ENCODE measurements at regions of chr3 and their contacts with region 1.

Region 1: GRCh38 chr3:196195664-196196265 is 15.4 kb downstream of the ZDHHC19 start:
- DNase-seq: no peak
- H3K4me3 ChIP-seq: no peak overlapping the region
- H3K27ac ChIP-seq: no peak overlapping the region
- H3K4me1 ChIP-seq: no peaks in the 10 kb centered on the region
- H3K27me3 ChIP-seq: no peaks in the 10 kb centered on the region
- CTCF ChIP-seq: no peak
- POLR2A ChIP-seq: no peak

Region 2: DNA sequence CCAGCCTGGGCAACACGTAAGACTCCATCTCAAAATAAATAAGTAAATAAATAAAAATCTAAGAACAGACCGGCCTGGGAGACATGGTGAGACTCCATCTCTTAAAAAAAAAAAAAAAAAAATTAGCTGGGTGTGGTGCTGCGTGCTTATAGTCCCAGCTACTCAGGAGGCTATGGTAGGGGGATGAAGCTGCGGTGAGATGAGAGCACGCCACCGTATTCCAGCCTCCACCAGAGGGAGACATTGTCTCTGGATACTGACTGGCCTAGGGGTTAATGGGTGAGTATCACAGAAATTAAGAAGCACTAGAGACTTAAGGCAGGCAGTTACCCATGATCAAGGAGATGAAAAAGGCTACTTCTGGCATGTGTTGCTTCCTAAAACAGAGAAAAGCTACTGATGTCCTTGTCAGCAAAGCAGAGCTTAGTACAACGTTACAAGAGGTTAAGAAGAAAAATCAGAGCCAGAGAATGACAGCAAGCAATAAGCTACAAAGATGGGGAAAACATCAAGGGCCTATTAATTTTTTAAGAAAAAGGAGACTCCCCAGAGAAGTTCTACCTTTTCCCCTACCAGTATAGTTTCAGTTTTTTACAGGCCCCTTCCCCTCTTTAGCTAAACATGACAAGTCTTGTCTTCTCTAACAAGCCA is 122.5 kb before region 1 on chr3:
- intact Hi-C with region 1: loop called (anchors 1 kb)
- DNase-seq: peak; percentile 70
- H3K4me3 ChIP-seq: no peak overlapping the region
- H3K27ac ChIP-seq: no peak overlapping the region
- H3K4me1 ChIP-seq: no peaks in the 10 kb centered on the region
- H3K27me3 ChIP-seq: no peaks in the 10 kb centered on the region
- CTCF ChIP-seq: peak; percentile 64 to 87 (median 86)
- POLR2A ChIP-seq: no peak

Measured in prostate gland (tissue), 2 donors.